Endothelial cell of umbilical vein (primary cell): ENCODE measurements at regions of chr10 and their contacts with region 1.

Region 1: DNA sequence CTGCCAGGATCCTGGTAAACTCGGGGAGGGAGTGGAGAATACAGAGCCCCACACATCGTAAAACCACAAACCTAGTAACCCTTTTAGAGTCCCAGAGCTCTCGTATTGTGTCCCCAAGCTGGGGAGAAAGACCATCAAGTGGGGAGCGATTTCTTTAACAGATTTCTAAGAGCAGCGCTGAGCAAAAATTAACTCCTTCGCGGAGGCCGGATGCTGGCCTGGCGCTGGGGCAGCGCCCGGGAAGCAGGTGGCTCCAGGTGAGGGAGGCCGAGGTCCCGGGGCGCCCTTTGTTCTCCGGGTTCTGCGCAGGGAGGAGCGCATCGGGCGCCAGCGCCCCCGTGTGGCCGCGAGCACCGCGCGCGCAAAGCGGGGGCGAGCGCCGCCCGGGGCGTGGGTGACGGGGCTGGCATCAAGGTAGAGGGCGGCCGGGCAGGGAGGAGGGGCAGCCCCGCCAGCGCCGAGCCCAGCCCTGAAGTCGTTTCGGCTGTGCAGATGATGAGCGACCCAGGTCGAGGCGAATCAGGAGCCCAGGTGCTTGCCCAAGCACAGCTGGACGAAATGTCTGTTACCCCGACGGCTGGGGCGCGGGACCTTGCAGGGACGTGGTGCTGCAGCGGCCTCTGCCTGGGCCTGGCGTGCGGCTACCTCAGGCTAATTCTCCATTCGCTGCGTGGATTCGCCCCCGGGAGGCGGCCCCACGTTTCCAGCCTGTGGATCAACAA is 10.4 kb upstream of the FGFR2 start:
- DNase-seq: peak; percentile 24
- H3K4me3 ChIP-seq: no peak overlapping the region
- H3K27ac ChIP-seq: no peak overlapping the region
- H3K4me1 ChIP-seq: no peaks in the 10 kb centered on the region
- H3K27me3 ChIP-seq: peaks cover 7 to 11% of the 10 kb centered on the region in 2 experiments
- CTCF ChIP-seq: peak; percentile 72 to 80
- POLR2A ChIP-seq: no peak

Region 2: DNA sequence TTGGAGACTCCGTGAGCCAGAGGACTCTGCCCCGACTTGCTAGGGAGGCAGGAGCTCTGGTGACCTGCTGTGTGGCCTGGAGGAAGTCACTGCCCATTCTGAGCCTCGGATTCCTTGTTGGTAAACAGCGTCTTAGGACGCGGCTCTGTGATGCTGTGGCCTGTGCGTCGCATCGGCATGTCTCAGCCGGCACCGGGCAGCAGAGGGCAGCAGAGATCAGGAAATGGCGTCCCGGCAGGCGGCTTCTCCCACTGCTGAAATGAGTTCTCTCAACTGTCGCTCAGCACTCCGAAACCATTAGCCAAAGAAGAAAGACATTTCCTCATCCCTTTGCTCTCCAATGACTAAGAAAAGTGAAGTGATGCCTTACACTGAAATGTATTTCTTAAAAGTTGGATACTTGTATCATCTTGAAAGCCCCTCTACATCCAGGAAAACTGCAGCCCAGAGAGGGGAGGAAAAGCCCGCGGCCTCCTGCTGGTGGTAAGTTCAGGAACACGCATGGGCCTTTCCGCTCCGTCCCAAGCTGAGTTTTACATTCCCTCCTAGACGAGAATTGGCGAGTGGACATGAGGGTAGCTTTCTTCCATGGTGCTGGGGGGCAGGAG is 665.7 kb before region 1 on chr10:
- CTCF ChIA-PET with region 1: no interaction called
- POLR2A ChIA-PET with region 1: no interaction called
- dilution Hi-C with region 1: no loop called
- intact Hi-C with region 1: loop called (anchors 1 kb)
- DNase-seq: peak; percentile 81
- H3K4me3 ChIP-seq: no peak overlapping the region
- H3K27ac ChIP-seq: no peak overlapping the region
- H3K4me1 ChIP-seq: no peaks in the 10 kb centered on the region
- H3K27me3 ChIP-seq: no peaks in the 10 kb centered on the region
- CTCF ChIP-seq: peak; percentile 83 to 85
- POLR2A ChIP-seq: no peak

Region 3: GRCh38 chr10:121880895-121881294 is 272.3 kb after region 1 on chr10:
- CTCF ChIA-PET with region 1: no interaction called
- POLR2A ChIA-PET with region 1: no interaction called
- dilution Hi-C with region 1: no loop called
- intact Hi-C with region 1: no loop called
- DNase-seq: peak; percentile 2
- H3K4me3 ChIP-seq: no peak overlapping the region
- H3K27ac ChIP-seq: no peak overlapping the region
- H3K4me1 ChIP-seq: no peaks in the 10 kb centered on the region
- H3K27me3 ChIP-seq: no peaks in the 10 kb centered on the region
- CTCF ChIP-seq: no peak
- POLR2A ChIP-seq: no peak